Transverse colon (tissue), 4 donors: ENCODE measurements at regions of chr11 and their contacts with region 1.

Region 1: DNA sequence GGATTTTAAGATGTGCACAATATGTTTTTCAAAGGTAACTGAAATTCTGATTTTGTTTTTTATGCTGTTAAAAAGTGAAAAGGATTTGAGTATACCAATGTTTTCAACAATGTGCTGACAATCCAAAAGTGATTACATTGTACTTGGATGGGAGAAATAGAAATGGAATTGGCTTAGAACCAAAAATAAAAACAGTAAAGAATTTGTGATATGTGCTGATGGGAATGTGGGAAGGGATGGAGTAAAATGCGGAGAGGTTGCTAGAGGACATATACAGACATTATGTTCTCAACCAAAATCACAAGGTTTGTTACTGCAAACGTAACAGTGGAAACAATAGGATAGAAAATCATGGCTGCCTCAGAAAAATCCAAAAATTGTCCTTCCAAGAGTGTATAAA is 279.3 kb upstream of the TENM4 start:
- DNase-seq: no peak
- H3K4me3 ChIP-seq: no peak overlapping the region
- H3K27ac ChIP-seq: no peak overlapping the region
- H3K4me1 ChIP-seq: no peaks in the 10 kb centered on the region
- H3K27me3 ChIP-seq: no peaks in the 10 kb centered on the region
- CTCF ChIP-seq: no peak
- EP300 ChIP-seq: no peak
- POLR2A ChIP-seq: no peak

Region 2: DNA sequence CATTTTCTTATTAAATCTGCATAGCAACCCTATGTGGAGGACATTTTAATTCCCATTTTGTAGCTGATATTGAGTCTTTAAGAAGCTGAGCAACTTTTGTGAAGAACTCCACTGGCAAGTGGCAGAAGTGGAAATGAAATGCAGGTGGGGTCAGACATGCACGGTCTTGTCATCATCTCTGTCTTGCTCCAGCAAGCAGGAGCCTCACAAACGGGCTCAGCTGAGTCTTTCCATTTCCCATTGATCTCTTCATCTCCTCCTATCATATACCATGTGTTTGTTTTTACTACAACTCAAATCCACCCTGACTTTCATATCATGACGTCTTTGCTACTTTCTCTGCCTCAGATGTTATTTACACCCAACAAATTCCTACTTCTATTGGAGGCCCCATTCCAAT is 181.3 kb before region 1 on chr11:
- in situ Hi-C with region 1: no loop called
- intact Hi-C with region 1: loop called (anchors 5 kb)
- DNase-seq: no peak
- H3K4me3 ChIP-seq: no peak overlapping the region
- H3K27ac ChIP-seq: no peak overlapping the region
- H3K4me1 ChIP-seq: no peaks in the 10 kb centered on the region
- H3K27me3 ChIP-seq: no peaks in the 10 kb centered on the region
- CTCF ChIP-seq: no peak
- EP300 ChIP-seq: no peak
- POLR2A ChIP-seq: no peak